Psoas muscle (tissue), 8 donors: ENCODE measurements at regions of chr2 and their contacts with region 1.

Region 1: GRCh38 chr2:117814417-117815264 is at the start of gene DDX18:
- DNase-seq: peak; percentile 97 to 98
- ATAC-seq: peak; percentile 98 to 99 (median 98)
- H3K4me3 ChIP-seq: peak within 1 kb of the TSS; percentile 90
- H3K27ac ChIP-seq: peak within 1 kb of the TSS; percentile 96
- H3K4me1 ChIP-seq: peaks cover 24% of the 10 kb centered on the region
- H3K27me3 ChIP-seq: no peaks in the 10 kb centered on the region
- CTCF ChIP-seq: peak; percentile 98
- total RNA-seq, gene DDX18: 24.5 to 33.4 (median 30.4) TPM

Region 2: GRCh38 chr2:118003396-118003824 is 188.8 kb after region 1 on chr2:
- intact Hi-C with region 1: loop called in 1 of 2 experiments (anchors 5 kb)
- DNase-seq: no peak
- ATAC-seq: peak; percentile 76 to 99 (median 88)
- H3K4me3 ChIP-seq: no peak overlapping the region
- H3K27ac ChIP-seq: no peak overlapping the region
- H3K4me1 ChIP-seq: peaks cover 5% of the 10 kb centered on the region
- H3K27me3 ChIP-seq: no peaks in the 10 kb centered on the region
- CTCF ChIP-seq: peak; percentile 79

Region 3: DNA sequence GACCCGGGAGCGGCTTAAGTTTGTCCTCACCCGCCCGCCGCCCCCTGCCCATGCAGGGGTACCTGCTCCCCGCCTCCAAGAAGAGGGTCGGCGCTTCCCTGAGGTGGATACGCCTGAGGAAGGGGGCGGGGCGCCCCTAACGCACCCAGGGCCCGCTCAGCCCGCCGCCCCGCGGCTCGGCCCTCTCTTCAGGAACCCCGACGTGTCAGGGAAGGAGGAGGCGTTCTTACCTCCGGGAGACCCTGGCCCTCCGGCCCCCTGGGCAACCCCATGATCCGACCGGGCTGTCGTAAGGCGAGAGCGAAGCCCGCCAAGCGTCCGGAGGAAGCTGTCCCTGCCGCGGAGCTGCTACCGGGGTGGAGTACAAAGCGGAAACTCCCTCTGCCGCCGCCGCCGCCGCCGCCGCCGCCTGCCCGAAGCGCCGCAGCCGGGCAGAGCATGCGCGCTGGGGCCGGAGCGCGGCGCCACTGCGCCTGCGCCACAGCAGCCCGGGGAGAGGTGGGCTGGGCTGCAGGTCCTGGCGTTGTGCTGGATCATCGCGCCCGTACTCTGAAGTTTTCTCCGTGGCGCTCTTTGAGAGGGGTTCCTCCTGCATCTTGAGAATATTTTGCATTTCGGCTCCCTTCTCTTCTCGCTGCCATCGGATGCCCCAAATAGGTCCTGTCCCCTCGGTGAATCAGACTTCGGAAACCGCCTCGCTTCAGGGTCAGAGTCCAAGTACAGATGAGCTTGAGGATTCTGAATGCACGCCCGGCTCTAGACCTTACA is 199.3 kb after region 1 on chr2 and contains the start of gene CCDC93:
- intact Hi-C with region 1: loop called in 1 of 2 experiments (anchors 5 kb)
- DNase-seq: peak; percentile 85 to 92
- ATAC-seq: peak; percentile 95 to 98 (median 97)
- H3K4me3 ChIP-seq: peak within 1 kb of the TSS; percentile 100
- H3K27ac ChIP-seq: peak within 1 kb of the TSS; percentile 89
- H3K4me1 ChIP-seq: peaks cover 17% of the 10 kb centered on the region
- H3K27me3 ChIP-seq: no peaks in the 10 kb centered on the region
- CTCF ChIP-seq: no peak
- total RNA-seq, gene CCDC93: 9.9 to 15.5 (median 14.5) TPM

Region 4: DNA sequence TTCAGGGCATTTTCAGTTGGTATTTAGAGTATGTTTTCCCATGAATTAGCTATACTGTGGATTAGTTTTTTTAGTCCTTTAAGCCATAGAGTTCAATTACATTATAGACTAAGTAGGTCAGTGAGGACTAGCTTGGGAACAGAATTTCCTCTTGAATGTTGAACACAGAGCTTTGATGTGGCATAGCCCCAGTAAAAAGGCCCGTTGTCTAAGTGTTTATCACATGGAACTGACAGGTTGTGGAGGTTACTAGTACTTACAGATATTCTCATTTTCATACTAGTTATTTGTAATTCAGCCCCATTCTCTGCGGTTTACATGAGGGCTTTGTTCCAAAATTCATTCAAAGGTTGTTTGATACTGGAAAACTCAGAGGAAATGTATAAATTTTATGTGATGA is 279.9 kb after region 1 on chr2:
- intact Hi-C with region 1: loop called in 1 of 2 experiments (anchors 5 kb)
- DNase-seq: no peak
- ATAC-seq: no peak
- H3K4me3 ChIP-seq: no peak overlapping the region
- H3K27ac ChIP-seq: no peak overlapping the region
- H3K4me1 ChIP-seq: no peaks in the 10 kb centered on the region
- H3K27me3 ChIP-seq: no peaks in the 10 kb centered on the region
- CTCF ChIP-seq: no peak